GM12878 (cell line): ENCODE measurements at regions of chr1 and their contacts with region 1.

Region 1: GRCh38 chr1:202154766-202155477 is 5.5 kb downstream of the PTPN7 start:
- DNase-seq: no peak
- ATAC-seq: peak; percentile 50
- H3K4me3 ChIP-seq: no peak overlapping the region
- H3K27ac ChIP-seq: no peak overlapping the region
- H3K4me1 ChIP-seq: peaks cover 16% of the 10 kb centered on the region
- H3K27me3 ChIP-seq: no peaks in the 10 kb centered on the region
- CTCF ChIP-seq: peak; percentile 65 to 70 (median 68); a peak in 5 of 6 replicates
- EP300 ChIP-seq: no peak
- POLR2A ChIP-seq: no peak
- RAD21 ChIP-seq: peak; percentile 65

Region 2: GRCh38 chr1:202085682-202086404 is 69.1 kb before region 1 on chr1:
- CTCF ChIA-PET with region 1: no interaction called
- POLR2A ChIA-PET with region 1: no interaction called
- RAD21 ChIA-PET with region 1: no interaction called
- SMC1A ChIA-PET with region 1: no interaction called
- in situ Hi-C with region 1: no loop called
- intact Hi-C with region 1: no loop called
- DNase-seq: no peak
- ATAC-seq: no peak
- H3K4me3 ChIP-seq: no peak overlapping the region
- H3K27ac ChIP-seq: no peak overlapping the region
- H3K4me1 ChIP-seq: no peaks in the 10 kb centered on the region
- H3K27me3 ChIP-seq: peaks cover 0 to 1% of the 10 kb centered on the region in 2 experiments; a peak in 3 of 4 replicates
- CTCF ChIP-seq: no peak
- EP300 ChIP-seq: no peak
- POLR2A ChIP-seq: no peak
- RAD21 ChIP-seq: no peak

Region 3: DNA sequence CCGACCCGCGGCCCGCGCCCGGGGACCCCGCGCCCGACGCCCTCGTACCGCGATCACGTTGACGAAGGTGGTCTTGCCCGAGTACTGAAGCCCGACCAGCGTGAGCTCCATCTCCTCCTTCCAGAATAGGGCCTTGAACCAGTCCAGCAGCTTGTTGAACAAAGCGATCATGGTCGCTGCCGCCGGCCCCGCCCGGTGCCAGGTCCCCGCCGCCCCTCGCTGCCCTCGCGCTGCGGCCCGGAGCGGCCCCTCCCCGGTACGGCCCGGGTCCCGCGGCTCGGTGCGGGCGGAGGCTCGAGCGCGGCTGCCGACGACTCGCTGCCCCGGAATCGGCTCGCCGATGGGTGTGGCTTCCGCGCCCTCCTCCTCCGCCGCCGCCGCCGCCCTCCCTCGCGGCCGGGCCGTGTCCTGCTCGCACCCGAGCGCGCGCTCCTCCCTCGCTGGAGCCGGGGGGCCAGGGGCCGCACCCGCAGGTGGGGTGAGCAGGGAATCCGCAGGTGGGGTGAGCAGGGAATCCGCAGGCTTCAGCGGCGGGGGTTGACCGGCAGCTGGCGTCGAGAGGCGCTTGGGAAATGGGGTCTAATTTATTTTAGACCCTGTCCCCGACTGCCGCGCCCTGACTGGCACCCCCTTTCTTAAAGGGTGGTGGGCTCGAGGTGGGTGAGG is 10.4 kb before region 1 on chr1 and contains the start of gene ARL8A:
- CTCF ChIA-PET with region 1: interaction called, 25 read pairs
- POLR2A ChIA-PET with region 1: interaction called, 15 read pairs
- RAD21 ChIA-PET with region 1: interaction called, 11 read pairs
- SMC1A ChIA-PET with region 1: interaction called, 11 read pairs
- in situ Hi-C with region 1: no loop called
- intact Hi-C with region 1: no loop called
- DNase-seq: no peak
- ATAC-seq: peak; percentile 79
- H3K4me3 ChIP-seq: peak within 1 kb of the TSS; percentile 86
- H3K27ac ChIP-seq: peak within 1 kb of the TSS; percentile 76
- H3K4me1 ChIP-seq: peaks cover 14% of the 10 kb centered on the region
- H3K27me3 ChIP-seq: no peaks in the 10 kb centered on the region
- CTCF ChIP-seq: no peak
- EP300 ChIP-seq: no peak
- POLR2A ChIP-seq: peak; percentile 71
- RAD21 ChIP-seq: no peak
- polyA plus RNA-seq, gene ARL8A: 0.34 to 2.4 TPM

Region 4: GRCh38 chr1:202170726-202171125 is 15.8 kb after region 1 on chr1:
- CTCF ChIA-PET with region 1: interaction called, 66 read pairs
- POLR2A ChIA-PET with region 1: interaction called, 5 read pairs
- RAD21 ChIA-PET with region 1: interaction called, 12 read pairs
- SMC1A ChIA-PET with region 1: interaction called, 21 read pairs
- in situ Hi-C with region 1: no loop called
- intact Hi-C with region 1: no loop called
- DNase-seq: no peak
- ATAC-seq: peak; percentile 59
- H3K4me3 ChIP-seq: no peak overlapping the region
- H3K27ac ChIP-seq: no peak overlapping the region
- H3K4me1 ChIP-seq: peaks cover 5% of the 10 kb centered on the region
- H3K27me3 ChIP-seq: no peaks in the 10 kb centered on the region
- CTCF ChIP-seq: peak in 1 of 3 experiments; percentile 28; a peak in 1 of 6 replicates
- EP300 ChIP-seq: no peak
- POLR2A ChIP-seq: no peak
- RAD21 ChIP-seq: no peak

Region 5: GRCh38 chr1:202184750-202185460 is 30.0 kb after region 1 on chr1:
- CTCF ChIA-PET with region 1: interaction called, 171 read pairs
- POLR2A ChIA-PET with region 1: interaction called, 4 read pairs
- RAD21 ChIA-PET with region 1: interaction called, 27 read pairs
- SMC1A ChIA-PET with region 1: interaction called, 13 read pairs
- in situ Hi-C with region 1: no loop called
- intact Hi-C with region 1: no loop called
- DNase-seq: no peak
- ATAC-seq: peak; percentile 84
- H3K4me3 ChIP-seq: no peak overlapping the region
- H3K27ac ChIP-seq: no peak overlapping the region
- H3K4me1 ChIP-seq: no peaks in the 10 kb centered on the region; the same call in 1 of the 2 replicates
- H3K27me3 ChIP-seq: peaks cover 0 to 3% of the 10 kb centered on the region in 2 experiments; a peak in 2 of 4 replicates
- CTCF ChIP-seq: peak; percentile 78 to 92 (median 89)
- EP300 ChIP-seq: no peak
- POLR2A ChIP-seq: no peak
- RAD21 ChIP-seq: peak; percentile 46

Region 6: GRCh38 chr1:202205491-202206190 is 50.7 kb after region 1 on chr1:
- CTCF ChIA-PET with region 1: no interaction called
- POLR2A ChIA-PET with region 1: no interaction called
- RAD21 ChIA-PET with region 1: no interaction called
- SMC1A ChIA-PET with region 1: no interaction called
- in situ Hi-C with region 1: no loop called
- intact Hi-C with region 1: no loop called
- DNase-seq: no peak
- ATAC-seq: no peak
- H3K4me3 ChIP-seq: no peak overlapping the region
- H3K27ac ChIP-seq: no peak overlapping the region
- H3K4me1 ChIP-seq: no peaks in the 10 kb centered on the region
- H3K27me3 ChIP-seq: no peaks in the 10 kb centered on the region; a peak in 1 of 4 replicates
- CTCF ChIP-seq: no peak
- EP300 ChIP-seq: no peak
- POLR2A ChIP-seq: no peak
- RAD21 ChIP-seq: no peak

Region 7: GRCh38 chr1:202235856-202236837 is 81.2 kb after region 1 on chr1:
- CTCF ChIA-PET with region 1: no interaction called
- POLR2A ChIA-PET with region 1: no interaction called
- RAD21 ChIA-PET with region 1: no interaction called
- SMC1A ChIA-PET with region 1: no interaction called
- in situ Hi-C with region 1: no loop called
- intact Hi-C with region 1: no loop called
- DNase-seq: peak; percentile 12
- ATAC-seq: peak; percentile 94
- H3K4me3 ChIP-seq: no peak overlapping the region
- H3K27ac ChIP-seq: no peak overlapping the region
- H3K4me1 ChIP-seq: peaks cover 3% of the 10 kb centered on the region; the same call in 1 of the 2 replicates
- H3K27me3 ChIP-seq: no peaks in the 10 kb centered on the region; a peak in 1 of 4 replicates
- CTCF ChIP-seq: peak; percentile 68 to 98 (median 92)
- EP300 ChIP-seq: no peak
- POLR2A ChIP-seq: no peak
- RAD21 ChIP-seq: peak; percentile 26; the same call in 1 of the 2 replicates